RWPE1 (cell line): ENCODE measurements at regions of chr10 and their contacts with region 1.

Region 1: DNA sequence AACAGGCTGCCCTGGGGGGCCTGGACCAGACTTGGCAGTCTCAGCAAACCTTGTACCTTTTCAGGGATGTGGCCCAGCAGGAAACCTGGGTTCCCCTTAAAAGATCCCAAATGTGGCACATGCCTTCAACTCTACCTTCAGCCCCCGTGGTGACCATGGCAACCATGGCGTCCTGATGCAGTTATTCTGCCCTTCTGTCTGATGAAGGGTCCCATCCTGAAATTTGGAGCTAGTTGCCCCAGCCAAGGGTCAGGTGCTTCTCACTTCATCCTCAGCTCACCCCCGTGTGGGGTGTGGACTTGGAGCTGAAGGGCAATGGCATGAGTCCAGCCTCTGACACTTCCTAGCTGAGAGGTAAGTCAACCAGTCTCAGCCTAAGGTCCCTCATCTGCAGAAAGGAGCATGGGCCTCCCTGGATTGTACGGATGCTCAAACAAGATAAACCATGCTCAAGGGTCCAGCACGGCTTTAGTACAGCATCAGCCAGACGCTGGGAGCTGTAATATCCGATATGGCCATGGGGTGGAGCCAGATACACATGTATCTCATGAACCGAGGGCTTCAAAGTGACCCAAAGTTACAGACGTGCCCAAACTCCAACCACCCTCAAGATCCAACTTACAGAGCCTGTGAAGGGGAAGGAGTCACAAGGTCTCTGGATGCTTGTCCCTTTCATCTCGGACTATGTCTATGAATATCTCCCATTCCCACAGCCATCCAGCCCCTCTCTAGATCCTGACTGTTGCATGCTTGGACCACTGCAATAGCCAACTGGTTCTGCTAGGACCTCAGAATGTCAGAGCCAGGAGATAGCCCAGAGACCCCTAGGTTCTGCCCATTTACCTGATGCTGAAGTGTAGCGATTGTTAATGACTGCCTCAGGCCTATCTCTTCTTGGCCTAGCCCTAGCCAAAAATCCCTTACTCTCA is 142.5 kb downstream of the SH3PXD2A start:
- DNase-seq: peak; percentile 65
- H3K27ac ChIP-seq: peak overlapping the region; percentile 73
- CTCF ChIP-seq: peak; percentile 78

Region 2: GRCh38 chr10:103636492-103636891 is 76.3 kb before region 1 on chr10:
- CTCF ChIA-PET with region 1: no interaction called
- POLR2A ChIA-PET with region 1: no interaction called
- DNase-seq: no peak
- H3K27ac ChIP-seq: peak overlapping the region; percentile 48
- CTCF ChIP-seq: no peak

Region 3: DNA sequence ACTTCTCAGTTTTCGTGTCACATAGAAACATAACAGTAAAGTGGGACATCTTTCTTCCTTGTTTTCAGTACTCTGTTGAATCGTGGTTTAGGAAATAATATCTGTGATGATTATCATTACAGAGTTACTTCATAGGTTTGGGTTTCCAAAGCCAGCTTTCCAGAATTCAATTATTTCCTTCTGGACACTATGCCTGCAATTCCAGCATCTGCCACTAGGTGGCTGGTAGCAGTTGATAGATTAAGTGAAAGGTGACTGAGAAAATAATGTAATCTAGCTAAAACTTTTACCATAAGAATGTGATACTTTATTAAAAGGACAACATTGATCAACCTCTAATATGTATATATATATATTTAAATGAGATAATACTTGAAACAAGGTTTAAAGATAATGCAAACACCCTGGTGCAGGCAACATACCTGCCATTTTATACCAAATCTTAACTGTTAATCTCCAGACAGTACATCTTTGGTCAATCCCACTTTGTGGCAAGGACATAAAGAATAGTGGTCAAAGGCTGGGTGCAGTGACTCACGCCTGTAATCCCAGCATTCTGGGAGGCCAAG is 39.9 kb after region 1 on chr10:
- CTCF ChIA-PET with region 1: interaction called, 17 read pairs
- POLR2A ChIA-PET with region 1: no interaction called
- DNase-seq: no peak
- H3K27ac ChIP-seq: no peak overlapping the region
- CTCF ChIP-seq: peak; percentile 69

Region 4: GRCh38 chr10:103884681-103885139 is 171.9 kb after region 1 on chr10:
- CTCF ChIA-PET with region 1: interaction called, 11 read pairs
- POLR2A ChIA-PET with region 1: no interaction called
- DNase-seq: peak; percentile 86
- H3K27ac ChIP-seq: peak overlapping the region; percentile 69
- CTCF ChIP-seq: peak; percentile 78

Region 5: DNA sequence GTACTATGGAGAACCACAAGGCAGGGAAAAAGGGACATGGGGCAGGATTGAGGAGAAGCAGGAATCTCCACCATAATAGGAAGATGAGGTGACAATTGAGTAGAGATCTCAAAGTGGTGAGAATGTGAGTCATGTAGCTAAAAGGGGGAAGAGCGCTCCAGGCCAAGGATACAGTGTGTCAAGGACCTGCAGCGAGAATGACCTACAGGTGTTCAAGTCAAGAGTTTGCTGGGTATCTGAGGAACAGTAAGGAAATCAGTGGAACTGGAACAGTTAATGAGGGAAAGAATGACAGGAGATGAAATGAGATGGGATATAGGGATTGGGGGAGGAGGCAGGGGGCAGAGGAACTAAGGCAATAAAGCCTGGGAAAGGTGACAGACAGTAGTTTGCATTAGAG is 442.8 kb after region 1 on chr10:
- CTCF ChIA-PET with region 1: no interaction called
- POLR2A ChIA-PET with region 1: no interaction called
- DNase-seq: no peak
- H3K27ac ChIP-seq: no peak overlapping the region
- CTCF ChIP-seq: no peak